Activated CD8-positive, alpha-beta T cell treated with anti-CD3 and anti-CD28 coated beads for 36 hours (primary cell): ENCODE measurements at regions of chr7 and their contacts with region 1.

Region 1: DNA sequence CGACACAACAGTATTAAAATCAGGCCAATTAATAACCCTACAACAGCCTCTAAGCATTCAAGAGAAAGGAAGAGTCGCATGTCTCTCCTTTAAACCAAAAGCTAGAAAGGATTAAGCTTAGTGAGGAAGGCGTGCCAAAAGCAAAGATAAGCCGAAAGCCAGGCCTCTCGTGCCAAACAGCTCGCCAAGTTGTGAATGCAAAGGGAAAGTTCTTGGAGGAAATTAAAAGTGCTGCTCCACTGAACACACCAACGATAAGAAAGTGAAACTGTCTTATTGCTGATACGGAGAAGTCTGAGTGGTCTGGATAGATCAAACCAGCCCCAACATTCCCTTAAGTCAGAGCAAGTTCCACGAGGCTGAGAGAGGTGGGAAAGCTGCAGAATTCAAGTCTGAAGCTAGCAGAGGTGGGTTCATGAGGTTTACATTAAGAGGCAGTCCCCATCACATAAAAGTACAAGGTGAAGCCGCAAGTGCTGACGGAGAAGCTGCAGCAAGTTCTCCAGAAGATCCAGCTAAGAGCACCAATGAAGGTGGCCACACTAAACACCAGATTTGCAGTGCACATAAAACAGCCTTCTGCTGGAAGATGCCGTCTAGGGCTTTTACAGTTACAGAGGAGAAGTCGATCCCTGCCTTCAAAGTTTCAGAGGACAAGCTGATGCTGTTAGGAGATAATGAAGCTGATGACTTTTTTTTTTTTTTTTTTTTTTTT is 194.8 kb downstream of the MAD1L1 start:
- DNase-seq: peak; percentile 37
- ATAC-seq: peak; percentile 55
- H3K4me3 Mint-ChIP-seq: peak overlapping the region; percentile 80
- H3K27ac Mint-ChIP-seq: peak overlapping the region; percentile 95
- H3K4me1 Mint-ChIP-seq: peaks cover 56% of the 10 kb centered on the region
- H3K27me3 Mint-ChIP-seq: no peaks in the 10 kb centered on the region
- CTCF ChIP-seq: no peak

Region 2: DNA sequence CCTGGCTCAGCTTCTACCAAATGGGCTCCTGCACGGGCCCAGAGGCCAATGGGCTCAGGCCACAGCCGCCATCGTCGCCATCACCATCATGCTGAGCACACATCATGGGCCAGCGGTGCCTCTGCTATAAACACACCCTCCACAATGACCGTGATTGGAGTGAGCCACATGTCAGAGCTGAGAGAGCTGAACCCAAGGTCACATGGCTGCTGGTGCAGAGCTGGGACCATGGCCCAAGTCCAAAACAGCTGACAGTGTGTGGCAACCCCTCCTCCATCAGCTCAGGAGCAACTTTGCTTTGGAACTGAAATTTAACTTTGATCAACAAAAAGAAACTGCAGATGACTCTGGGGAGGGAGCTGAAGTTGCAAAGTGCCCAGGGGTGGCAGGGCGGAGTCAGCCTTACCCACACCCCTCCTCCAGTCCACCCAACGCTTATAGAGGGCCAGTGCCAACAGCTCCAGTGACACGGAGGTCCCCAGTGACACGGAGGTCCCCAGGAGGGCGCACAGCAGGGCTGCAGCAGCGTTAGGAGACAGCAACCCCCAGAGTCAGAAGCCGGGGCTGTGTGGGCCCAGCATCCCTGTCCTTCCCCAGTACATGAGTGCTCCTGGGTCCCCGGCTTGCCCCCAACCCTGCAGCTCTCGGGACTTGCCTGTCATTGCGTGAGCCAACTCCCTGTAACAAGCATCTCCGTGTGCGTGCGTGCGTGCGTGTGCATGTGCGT is 118.3 kb before region 1 on chr7:
- CTCF ChIA-PET with region 1: no interaction called
- POLR2A ChIA-PET with region 1: interaction called, 3 read pairs
- intact Hi-C with region 1: loop called (anchors 10 kb)
- DNase-seq: no peak
- ATAC-seq: peak; percentile 32
- H3K4me3 Mint-ChIP-seq: peak overlapping the region; percentile 66
- H3K27ac Mint-ChIP-seq: peak overlapping the region; percentile 41
- H3K4me1 Mint-ChIP-seq: peaks cover 60% of the 10 kb centered on the region
- H3K27me3 Mint-ChIP-seq: peaks cover 1% of the 10 kb centered on the region
- CTCF ChIP-seq: no peak

Region 3: DNA sequence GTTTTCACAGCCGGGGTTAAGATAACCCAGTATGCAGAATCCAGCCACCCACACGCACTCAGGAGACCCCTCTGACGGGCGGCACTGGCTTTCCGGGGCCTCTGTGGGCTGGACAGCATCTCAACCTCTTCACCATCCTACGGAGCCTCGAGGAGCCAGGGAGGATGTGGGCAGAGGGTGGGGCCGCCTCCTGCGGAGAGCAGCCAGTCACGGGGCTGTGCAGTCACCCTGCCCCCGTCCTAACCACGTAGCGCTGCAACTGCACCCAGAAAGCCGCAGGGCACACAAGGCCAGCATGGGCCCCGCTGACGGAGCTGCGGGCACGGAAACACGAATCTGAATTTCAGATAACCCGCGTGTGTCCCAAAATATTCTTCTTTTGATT is 97.6 kb before region 1 on chr7:
- CTCF ChIA-PET with region 1: no interaction called
- POLR2A ChIA-PET with region 1: interaction called, 10 read pairs
- intact Hi-C with region 1: no loop called
- DNase-seq: peak; percentile 97
- ATAC-seq: peak; percentile 91
- H3K4me3 Mint-ChIP-seq: peak overlapping the region; percentile 76
- H3K27ac Mint-ChIP-seq: peak overlapping the region; percentile 96
- H3K4me1 Mint-ChIP-seq: peaks cover 61% of the 10 kb centered on the region
- H3K27me3 Mint-ChIP-seq: no peaks in the 10 kb centered on the region
- CTCF ChIP-seq: no peak